Activated CD4-positive, alpha-beta T cell treated with anti-CD3 and anti-CD28 coated beads for 36 hours (primary cell): ENCODE measurements at regions of chr1 and their contacts with region 1.

Region 1: DNA sequence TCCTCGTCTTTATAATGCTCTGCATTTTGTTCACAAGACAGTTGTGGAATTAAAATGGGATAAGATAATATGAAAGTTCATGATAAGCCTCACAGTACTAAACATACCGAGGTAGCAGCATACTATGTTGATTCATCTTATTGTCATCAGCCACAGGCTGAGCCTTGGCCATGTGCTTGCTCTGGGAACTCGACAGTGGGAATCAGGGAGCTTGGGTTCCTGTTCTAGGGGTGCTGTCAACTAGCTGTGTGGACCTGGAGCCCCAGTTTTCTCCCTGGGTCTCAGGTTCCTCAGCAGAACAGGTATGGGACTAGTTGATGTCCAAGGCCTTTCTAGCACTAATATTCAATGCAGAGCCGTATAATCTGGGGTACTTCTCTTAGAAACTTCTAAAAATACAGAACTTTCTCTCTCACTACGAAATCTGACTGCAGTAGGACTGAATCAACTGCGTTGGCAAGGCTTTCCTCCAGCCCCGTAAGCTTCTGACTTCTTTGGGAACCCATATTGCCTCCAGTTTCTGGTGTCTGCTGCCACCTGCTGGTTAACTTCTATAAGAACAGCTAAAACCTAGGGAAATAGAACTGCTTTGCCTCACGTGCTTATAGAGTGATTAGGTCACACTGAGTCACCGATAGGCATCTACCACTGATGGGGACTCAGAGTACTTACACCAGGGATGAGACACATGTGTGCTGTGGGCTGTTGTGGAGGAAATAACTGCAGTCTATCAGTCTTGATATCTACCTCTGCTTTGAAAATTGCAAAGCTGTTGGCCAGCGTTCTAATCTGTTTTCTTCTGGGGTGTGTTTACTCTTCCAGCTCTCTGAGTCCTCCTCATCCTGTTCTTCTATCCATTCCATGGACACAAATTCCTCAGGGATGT is 110.9 kb downstream of the RGL1 start:
- DNase-seq: peak; percentile 82
- ATAC-seq: peak; percentile 99
- H3K4me3 Mint-ChIP-seq: no peak overlapping the region
- H3K27ac Mint-ChIP-seq: no peak overlapping the region
- H3K4me1 Mint-ChIP-seq: peaks cover 19% of the 10 kb centered on the region
- H3K27me3 Mint-ChIP-seq: no peaks in the 10 kb centered on the region

Region 2: GRCh38 chr1:183281553-183282091 is 634.2 kb before region 1 on chr1:
- CTCF ChIA-PET with region 1: interaction called, 3 read pairs
- POLR2A ChIA-PET with region 1: no interaction called
- intact Hi-C with region 1: loop called (anchors 1 to 2 kb)
- DNase-seq: peak; percentile 86
- ATAC-seq: peak; percentile 86
- H3K4me3 Mint-ChIP-seq: no peak overlapping the region
- H3K27ac Mint-ChIP-seq: no peak overlapping the region
- H3K4me1 Mint-ChIP-seq: no peaks in the 10 kb centered on the region
- H3K27me3 Mint-ChIP-seq: peaks cover 7% of the 10 kb centered on the region

Region 3: GRCh38 chr1:183685112-183685713 is 230.7 kb before region 1 on chr1:
- CTCF ChIA-PET with region 1: interaction called, 30 read pairs
- POLR2A ChIA-PET with region 1: no interaction called
- intact Hi-C with region 1: loop called (anchors 1 to 10 kb)
- DNase-seq: peak; percentile 30
- ATAC-seq: peak; percentile 66
- H3K4me3 Mint-ChIP-seq: no peak overlapping the region
- H3K27ac Mint-ChIP-seq: no peak overlapping the region
- H3K4me1 Mint-ChIP-seq: peaks cover 7% of the 10 kb centered on the region
- H3K27me3 Mint-ChIP-seq: peaks cover 4% of the 10 kb centered on the region

Region 4: DNA sequence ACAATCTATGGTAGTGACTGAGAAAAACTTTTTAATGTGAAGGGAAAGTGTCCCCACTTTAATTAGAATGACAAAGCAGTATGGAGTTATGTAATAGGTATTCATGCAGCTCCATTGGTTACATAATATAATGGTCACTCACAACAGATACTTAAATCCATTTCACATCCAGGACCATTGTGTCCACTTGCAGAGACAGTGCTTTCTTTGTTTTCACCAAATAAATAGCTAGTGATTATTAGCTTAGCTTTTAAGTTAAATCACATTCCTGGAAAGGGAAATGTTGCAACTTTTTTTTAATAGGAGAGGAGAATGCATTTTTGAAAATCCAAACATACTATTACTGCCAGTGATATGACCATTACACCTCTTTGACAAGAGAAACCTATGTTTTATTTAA is 88.1 kb before region 1 on chr1:
- CTCF ChIA-PET with region 1: no interaction called
- POLR2A ChIA-PET with region 1: no interaction called
- intact Hi-C with region 1: no loop called
- DNase-seq: no peak
- ATAC-seq: no peak
- H3K4me3 Mint-ChIP-seq: no peak overlapping the region
- H3K27ac Mint-ChIP-seq: no peak overlapping the region
- H3K4me1 Mint-ChIP-seq: no peaks in the 10 kb centered on the region
- H3K27me3 Mint-ChIP-seq: no peaks in the 10 kb centered on the region

Region 5: DNA sequence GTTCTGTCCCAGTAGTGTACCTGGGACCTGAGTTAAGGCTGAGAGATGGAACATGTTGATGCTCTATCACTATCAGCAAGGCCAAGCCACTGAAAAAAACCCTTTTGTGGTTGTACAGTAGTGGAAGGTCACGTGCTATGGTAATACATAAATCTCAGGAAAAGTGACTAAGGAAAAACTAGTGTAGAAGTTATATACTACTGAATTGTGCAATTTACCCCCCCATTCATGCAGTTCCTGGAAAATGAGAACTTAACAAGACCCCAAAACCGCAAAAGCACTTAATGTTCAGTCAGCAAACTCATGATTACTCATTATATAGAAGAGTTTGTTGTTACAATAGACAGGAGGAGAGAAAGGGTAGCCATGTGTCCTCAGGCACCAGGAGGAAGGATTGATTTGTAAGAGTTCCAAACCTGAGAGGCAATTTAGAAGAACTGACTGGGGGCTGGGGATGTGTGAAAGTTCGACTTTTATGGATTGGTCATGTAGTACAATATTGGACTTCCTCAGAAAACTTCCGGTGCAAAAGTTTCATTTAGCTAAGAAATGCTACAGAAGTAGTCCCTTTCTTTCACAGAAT is 19.3 kb before region 1 on chr1:
- CTCF ChIA-PET with region 1: interaction called, 16 read pairs
- POLR2A ChIA-PET with region 1: interaction called, 3 read pairs
- intact Hi-C with region 1: no loop called
- DNase-seq: no peak
- ATAC-seq: peak; percentile 36
- H3K4me3 Mint-ChIP-seq: no peak overlapping the region
- H3K27ac Mint-ChIP-seq: no peak overlapping the region
- H3K4me1 Mint-ChIP-seq: peaks cover 8% of the 10 kb centered on the region
- H3K27me3 Mint-ChIP-seq: no peaks in the 10 kb centered on the region

Region 6: DNA sequence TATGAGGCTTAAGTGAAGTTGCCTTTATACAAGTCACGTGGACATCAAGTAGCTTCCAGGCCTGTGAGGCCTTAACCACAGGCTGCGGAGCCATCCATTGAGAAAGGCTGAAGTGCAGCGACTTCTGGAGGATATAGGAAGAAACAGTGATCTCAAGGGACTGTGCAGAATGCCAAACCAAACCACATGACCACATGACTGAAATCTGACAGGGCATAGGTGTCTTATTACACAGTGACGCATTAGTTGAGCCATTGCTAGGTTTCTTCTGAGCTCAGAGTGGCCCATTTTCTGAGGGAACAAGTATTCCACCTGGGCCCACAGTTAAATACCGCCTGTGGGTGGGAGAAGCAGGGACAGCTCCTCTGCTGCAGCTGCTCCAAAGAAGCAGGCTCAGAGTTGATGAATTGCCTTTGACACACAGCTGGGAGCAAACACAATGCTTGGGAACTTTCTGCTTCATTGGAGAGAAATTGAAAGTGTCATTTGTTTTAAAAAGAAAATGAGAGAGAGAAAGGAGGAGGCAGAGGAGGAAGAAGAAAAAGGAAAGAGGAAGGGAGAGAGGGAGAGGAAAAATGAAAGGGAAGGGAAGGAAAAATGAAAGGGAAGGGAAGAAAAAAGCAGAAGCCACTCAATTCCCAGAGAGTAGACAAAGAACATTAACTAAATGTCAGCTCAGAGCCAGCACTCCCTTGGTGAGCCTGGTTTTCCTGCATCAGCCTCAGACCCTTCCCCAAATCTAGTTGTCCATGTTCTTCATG is 27.2 kb after region 1 on chr1:
- CTCF ChIA-PET with region 1: interaction called, 12 read pairs
- POLR2A ChIA-PET with region 1: no interaction called
- intact Hi-C with region 1: no loop called
- DNase-seq: no peak
- ATAC-seq: no peak
- H3K4me3 Mint-ChIP-seq: no peak overlapping the region
- H3K27ac Mint-ChIP-seq: no peak overlapping the region
- H3K4me1 Mint-ChIP-seq: no peaks in the 10 kb centered on the region
- H3K27me3 Mint-ChIP-seq: no peaks in the 10 kb centered on the region

Region 7: DNA sequence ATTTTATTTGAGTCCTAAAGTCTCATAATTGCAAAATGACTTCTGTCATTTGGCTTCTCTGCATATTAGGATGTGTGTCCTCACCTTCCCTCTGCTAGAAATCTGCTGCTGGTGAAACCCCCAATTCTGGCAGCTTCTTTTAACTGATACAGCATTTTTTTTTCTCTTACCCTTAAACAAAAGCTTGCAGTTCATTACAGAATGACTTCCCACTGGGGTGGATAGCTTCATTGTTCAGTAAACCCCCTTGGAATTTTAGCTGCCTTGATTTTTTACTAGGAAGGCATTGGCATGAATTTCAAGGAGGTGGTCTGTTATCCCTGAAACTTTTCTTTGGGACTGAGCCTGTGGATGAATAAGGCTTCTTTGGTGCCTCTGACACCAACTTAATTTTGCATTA is 152.5 kb after region 1 on chr1:
- CTCF ChIA-PET with region 1: no interaction called
- POLR2A ChIA-PET with region 1: no interaction called
- intact Hi-C with region 1: no loop called
- DNase-seq: no peak
- ATAC-seq: no peak
- H3K4me3 Mint-ChIP-seq: no peak overlapping the region
- H3K27ac Mint-ChIP-seq: no peak overlapping the region
- H3K4me1 Mint-ChIP-seq: peaks cover 9% of the 10 kb centered on the region
- H3K27me3 Mint-ChIP-seq: no peaks in the 10 kb centered on the region

Region 8: DNA sequence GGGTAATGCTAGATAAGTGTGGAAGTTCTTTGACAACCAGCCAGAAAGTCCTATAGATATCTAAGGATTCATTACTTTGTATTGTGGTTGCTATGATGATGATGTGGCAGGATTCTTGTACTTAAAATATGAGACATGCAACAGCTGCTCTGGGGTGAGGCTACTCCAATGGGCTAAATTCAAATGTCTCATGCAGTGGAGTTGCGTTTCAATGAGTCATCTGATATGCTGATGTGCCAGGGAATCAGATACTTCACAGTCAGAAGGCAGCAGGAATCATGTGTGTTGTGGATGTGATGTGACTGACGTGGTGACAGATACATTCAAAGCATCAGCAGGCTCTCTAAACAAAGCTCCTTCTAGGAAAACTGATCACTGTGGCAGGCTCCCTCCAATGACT is 202.2 kb after region 1 on chr1:
- CTCF ChIA-PET with region 1: no interaction called
- POLR2A ChIA-PET with region 1: no interaction called
- intact Hi-C with region 1: no loop called
- DNase-seq: no peak
- ATAC-seq: peak; percentile 19
- H3K4me3 Mint-ChIP-seq: no peak overlapping the region
- H3K27ac Mint-ChIP-seq: no peak overlapping the region
- H3K4me1 Mint-ChIP-seq: no peaks in the 10 kb centered on the region
- H3K27me3 Mint-ChIP-seq: no peaks in the 10 kb centered on the region

Region 9: DNA sequence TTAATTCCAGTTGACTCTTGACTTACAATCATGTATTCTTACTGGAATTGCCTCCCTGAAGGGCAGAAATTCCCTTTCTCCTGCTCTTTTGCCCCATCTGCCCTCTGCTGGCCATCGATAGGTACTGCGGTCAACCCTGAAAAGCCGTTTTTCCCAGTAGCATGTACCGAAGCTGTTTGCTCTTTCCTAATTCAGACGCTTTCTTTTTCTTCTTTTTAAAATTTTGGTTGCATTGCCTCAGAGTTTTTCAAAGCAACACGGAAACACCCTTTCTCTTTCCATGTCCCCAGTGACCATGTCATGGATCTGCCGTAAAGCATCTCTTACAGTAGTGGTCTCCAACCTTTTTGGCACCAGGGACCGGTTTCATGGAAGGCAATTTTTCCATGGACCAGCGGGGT is 306.8 kb after region 1 on chr1:
- CTCF ChIA-PET with region 1: no interaction called
- POLR2A ChIA-PET with region 1: no interaction called
- intact Hi-C with region 1: loop called in 1 of 2 experiments (anchors 10 kb)
- DNase-seq: peak; percentile 62
- ATAC-seq: no peak
- H3K4me3 Mint-ChIP-seq: no peak overlapping the region
- H3K27ac Mint-ChIP-seq: no peak overlapping the region
- H3K4me1 Mint-ChIP-seq: no peaks in the 10 kb centered on the region
- H3K27me3 Mint-ChIP-seq: no peaks in the 10 kb centered on the region

Region 10: DNA sequence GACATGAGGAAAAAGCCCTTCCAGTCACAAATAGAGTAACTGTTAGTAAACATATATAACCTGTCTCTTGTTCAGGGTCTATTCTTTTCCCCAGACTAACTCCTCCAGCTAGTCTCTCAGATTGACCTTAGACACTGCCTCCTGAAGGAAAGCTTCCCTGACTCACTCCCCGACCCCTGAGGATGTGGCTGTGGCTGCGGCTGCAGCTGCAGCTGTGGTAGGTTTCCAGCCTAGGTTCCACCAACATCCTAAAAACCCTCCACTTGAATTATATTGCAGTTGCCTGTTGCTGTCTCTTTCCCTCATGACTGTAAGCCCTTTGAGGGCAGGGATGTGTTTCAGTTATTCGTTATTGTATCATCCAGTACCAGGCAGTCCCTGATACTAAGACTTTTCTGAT is 338.1 kb after region 1 on chr1:
- CTCF ChIA-PET with region 1: no interaction called
- POLR2A ChIA-PET with region 1: no interaction called
- intact Hi-C with region 1: no loop called
- DNase-seq: no peak
- ATAC-seq: no peak
- H3K4me3 Mint-ChIP-seq: no peak overlapping the region
- H3K27ac Mint-ChIP-seq: no peak overlapping the region
- H3K4me1 Mint-ChIP-seq: no peaks in the 10 kb centered on the region
- H3K27me3 Mint-ChIP-seq: peaks cover 13% of the 10 kb centered on the region